ENCODE measurements at regions of chr16 and their contacts with region 1.

Region 1: DNA sequence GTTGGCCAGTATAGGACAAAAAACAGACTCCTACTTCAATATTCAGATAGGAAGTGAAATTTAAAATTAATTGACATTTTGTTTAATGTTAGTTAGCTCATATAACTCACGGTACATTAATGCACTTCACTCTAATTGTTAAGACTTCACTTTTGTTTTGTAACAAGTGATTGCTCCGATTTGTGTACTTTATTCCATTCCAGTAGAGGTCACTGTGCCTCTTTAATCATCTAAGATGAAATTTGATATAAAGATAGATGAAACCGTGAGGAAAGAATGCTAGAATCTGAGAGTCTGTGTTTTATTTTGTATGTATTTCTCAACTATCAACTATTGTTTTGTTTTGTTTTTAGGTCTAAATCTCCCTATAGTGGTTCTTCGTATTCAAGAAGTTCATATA is 29.0 kb downstream of the RBBP6 start:
- DNase-seq: peak; percentile 43
- ATAC-seq: no peak
- H3K4me3 ChIP-seq: no peak overlapping the region
- H3K27ac ChIP-seq: no peak overlapping the region
- H3K4me1 ChIP-seq: no peaks in the 10 kb centered on the region
- H3K27me3 ChIP-seq: no peaks in the 10 kb centered on the region
- CTCF ChIP-seq: peak; percentile 42
- POLR2A ChIP-seq: no peak
- RAD21 ChIP-seq: peak; percentile 41

Region 2: GRCh38 chr16:24776501-24777220 is 208.3 kb after region 1 on chr16:
- CTCF ChIA-PET with region 1: no interaction called
- POLR2A ChIA-PET with region 1: no interaction called
- dilution Hi-C with region 1: loop called (anchors 25 kb)
- in situ Hi-C with region 1: loop called (anchors 10 kb)
- intact Hi-C with region 1: no loop called
- DNase-seq: peak; percentile 33
- ATAC-seq: no peak
- H3K4me3 ChIP-seq: no peak overlapping the region
- H3K27ac ChIP-seq: peak overlapping the region; percentile 22; the same call in 1 of the 2 replicates
- H3K4me1 ChIP-seq: peaks cover 3% of the 10 kb centered on the region; the same call in 1 of the 2 replicates
- H3K27me3 ChIP-seq: no peaks in the 10 kb centered on the region
- CTCF ChIP-seq: no peak
- POLR2A ChIP-seq: no peak
- RAD21 ChIP-seq: no peak

Region 3: GRCh38 chr16:24789881-24790280 is 221.5 kb after region 1 on chr16:
- CTCF ChIA-PET with region 1: no interaction called
- POLR2A ChIA-PET with region 1: no interaction called
- dilution Hi-C with region 1: loop called (anchors 25 kb)
- in situ Hi-C with region 1: loop called (anchors 10 kb)
- intact Hi-C with region 1: loop called (anchors 5 kb)
- DNase-seq: no peak
- ATAC-seq: no peak
- H3K4me3 ChIP-seq: no peak overlapping the region
- H3K27ac ChIP-seq: no peak overlapping the region
- H3K4me1 ChIP-seq: no peaks in the 10 kb centered on the region
- H3K27me3 ChIP-seq: no peaks in the 10 kb centered on the region
- CTCF ChIP-seq: no peak
- POLR2A ChIP-seq: no peak
- RAD21 ChIP-seq: no peak

Region 4: DNA sequence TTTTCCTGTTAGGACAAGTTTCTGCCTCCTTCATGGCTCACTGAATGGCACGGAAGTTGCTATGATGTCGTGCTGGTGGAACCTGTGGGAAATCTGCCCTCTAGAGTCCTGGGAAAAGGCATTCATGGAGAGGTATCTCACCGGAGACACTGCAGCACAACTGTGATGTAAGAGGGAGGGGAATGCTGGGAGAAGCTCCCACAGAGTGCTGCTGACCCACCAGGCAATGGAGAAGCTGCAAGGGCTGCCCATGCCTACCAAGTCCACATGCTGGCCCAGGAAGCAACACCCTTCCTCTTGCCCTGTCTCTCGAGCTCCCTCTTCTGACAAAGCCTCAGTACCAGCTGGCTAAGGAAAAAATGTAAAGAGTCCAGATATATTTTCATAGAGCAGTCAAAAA is 232.2 kb after region 1 on chr16:
- CTCF ChIA-PET with region 1: interaction called, 3 read pairs
- POLR2A ChIA-PET with region 1: no interaction called
- dilution Hi-C with region 1: loop called (anchors 25 kb)
- in situ Hi-C with region 1: no loop called
- intact Hi-C with region 1: loop called (anchors 5 kb)
- DNase-seq: peak; percentile 65
- ATAC-seq: peak; percentile 53
- H3K4me3 ChIP-seq: no peak overlapping the region
- H3K27ac ChIP-seq: no peak overlapping the region
- H3K4me1 ChIP-seq: peaks cover 4% of the 10 kb centered on the region; the same call in 1 of the 2 replicates
- H3K27me3 ChIP-seq: no peaks in the 10 kb centered on the region
- CTCF ChIP-seq: peak; percentile 23
- POLR2A ChIP-seq: no peak
- RAD21 ChIP-seq: no peak; the same call in 1 of the 2 replicates

Region 5: GRCh38 chr16:24939234-24939633 is 370.8 kb after region 1 on chr16:
- CTCF ChIA-PET with region 1: no interaction called
- POLR2A ChIA-PET with region 1: no interaction called
- dilution Hi-C with region 1: no loop called
- in situ Hi-C with region 1: loop called (anchors 25 kb)
- intact Hi-C with region 1: no loop called
- DNase-seq: no peak
- ATAC-seq: no peak
- H3K4me3 ChIP-seq: no peak overlapping the region
- H3K27ac ChIP-seq: peak overlapping the region; percentile 57; the same call in 1 of the 2 replicates
- H3K4me1 ChIP-seq: no peaks in the 10 kb centered on the region
- H3K27me3 ChIP-seq: no peaks in the 10 kb centered on the region
- CTCF ChIP-seq: no peak
- POLR2A ChIP-seq: no peak
- RAD21 ChIP-seq: no peak

Measured in IMR-90 (cell line).